ENCODE measurements at regions of chr22 and their contacts with region 1.

Region 1: DNA sequence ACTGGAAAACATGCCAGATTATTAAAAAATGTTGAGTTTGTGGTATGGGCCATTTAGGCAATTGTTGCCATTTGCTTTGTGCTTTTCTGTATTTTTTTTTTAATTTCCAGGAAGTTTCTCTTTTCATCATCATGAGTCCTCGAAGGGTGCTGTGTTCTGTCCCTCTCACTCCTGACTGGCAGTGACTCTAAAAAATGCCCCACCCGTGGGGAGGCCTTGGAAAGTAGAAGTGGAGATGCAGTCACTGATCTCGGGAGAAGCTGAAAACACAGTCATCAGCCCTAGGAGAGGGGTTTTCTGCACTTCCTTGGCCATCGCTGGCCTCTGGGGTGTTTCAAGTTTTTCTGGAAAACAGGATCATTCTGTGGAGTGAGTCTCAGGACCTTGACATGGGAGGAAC is 98.5 kb upstream of the GRK3 start:
- DNase-seq: no peak
- H3K4me3 ChIP-seq: no peak overlapping the region
- H3K27ac ChIP-seq: peak overlapping the region in 1 of 4 donors; percentile 41
- H3K4me1 ChIP-seq: no peaks in the 10 kb centered on the region
- H3K27me3 ChIP-seq: no peaks in the 10 kb centered on the region
- CTCF ChIP-seq: no peak
- EP300 ChIP-seq: no peak
- POLR2A ChIP-seq: no peak

Region 2: DNA sequence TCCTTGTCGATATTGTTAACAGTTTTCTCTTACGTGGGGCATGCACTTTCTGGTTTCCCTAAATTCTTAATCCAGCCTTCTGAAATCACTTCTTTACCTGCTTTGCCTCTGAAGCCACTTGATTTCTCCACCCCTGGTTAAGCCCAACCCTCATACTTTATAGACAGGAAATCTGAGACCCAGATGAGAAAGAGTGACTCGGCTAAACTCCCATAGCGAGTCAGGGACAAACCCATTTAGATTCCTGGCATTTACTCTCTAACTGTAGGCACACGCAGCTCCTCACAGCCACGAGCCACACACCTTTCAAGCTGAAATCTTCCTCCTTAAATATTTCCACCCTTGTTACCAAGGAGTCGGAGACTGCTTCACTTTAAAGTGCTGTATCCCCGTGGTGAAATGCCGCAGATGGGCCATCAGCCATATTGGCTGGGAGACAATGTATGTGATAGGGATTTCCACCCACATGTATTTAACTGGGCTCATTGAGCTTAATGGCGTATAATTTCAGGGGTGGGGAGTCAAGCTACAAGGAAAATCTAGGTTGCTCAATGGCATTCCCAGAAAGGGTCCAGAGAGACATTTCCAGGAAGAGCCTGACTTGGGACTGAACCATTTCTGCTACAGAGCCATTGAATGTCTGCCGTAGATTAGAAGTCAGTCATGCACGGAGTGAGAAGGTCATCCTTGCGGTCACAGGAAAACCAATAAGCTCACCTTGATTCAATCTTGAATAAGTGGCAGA is 48.7 kb after region 1 on chr22:
- in situ Hi-C with region 1: no loop called
- intact Hi-C with region 1: no loop called
- DNase-seq: no peak
- H3K4me3 ChIP-seq: no peak overlapping the region
- H3K27ac ChIP-seq: no peak overlapping the region
- H3K4me1 ChIP-seq: no peaks in the 10 kb centered on the region
- H3K27me3 ChIP-seq: no peaks in the 10 kb centered on the region
- CTCF ChIP-seq: no peak
- EP300 ChIP-seq: no peak
- POLR2A ChIP-seq: no peak

Region 3: DNA sequence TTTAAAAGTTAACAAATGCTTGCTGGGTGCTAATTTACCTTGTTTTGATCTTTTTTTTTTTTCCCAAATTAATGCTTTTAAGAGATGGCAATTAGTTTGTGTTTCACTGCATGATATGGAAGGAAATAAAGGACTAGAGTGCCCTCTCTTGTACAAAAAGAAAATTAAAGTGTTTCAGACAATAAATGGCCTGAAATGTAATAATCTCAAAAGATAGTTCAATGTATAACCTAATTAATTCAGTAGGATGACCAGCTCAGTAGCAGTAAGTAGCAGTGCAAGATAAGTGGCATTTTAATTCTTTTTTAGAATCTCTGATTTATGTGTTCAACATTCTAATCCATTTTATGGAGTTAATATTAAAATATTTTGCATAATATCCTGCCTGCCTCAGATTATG is 236.1 kb after region 1 on chr22:
- in situ Hi-C with region 1: loop called in 1 of 4 experiments (anchors 10 kb)
- intact Hi-C with region 1: loop called (anchors 5 kb)
- DNase-seq: no peak
- H3K4me3 ChIP-seq: no peak overlapping the region
- H3K27ac ChIP-seq: no peak overlapping the region
- H3K4me1 ChIP-seq: no peaks in the 10 kb centered on the region
- H3K27me3 ChIP-seq: no peaks in the 10 kb centered on the region
- CTCF ChIP-seq: peak; percentile 20 to 44 (median 30)
- EP300 ChIP-seq: no peak
- POLR2A ChIP-seq: no peak

Region 4: GRCh38 chr22:25709758-25710157 is 243.8 kb after region 1 on chr22:
- in situ Hi-C with region 1: loop called in 1 of 4 experiments (anchors 10 kb)
- intact Hi-C with region 1: loop called (anchors 5 kb)
- DNase-seq: no peak
- H3K4me3 ChIP-seq: no peak overlapping the region
- H3K27ac ChIP-seq: no peak overlapping the region
- H3K4me1 ChIP-seq: no peaks in the 10 kb centered on the region
- H3K27me3 ChIP-seq: no peaks in the 10 kb centered on the region
- CTCF ChIP-seq: no peak
- EP300 ChIP-seq: no peak
- POLR2A ChIP-seq: no peak

Region 5: DNA sequence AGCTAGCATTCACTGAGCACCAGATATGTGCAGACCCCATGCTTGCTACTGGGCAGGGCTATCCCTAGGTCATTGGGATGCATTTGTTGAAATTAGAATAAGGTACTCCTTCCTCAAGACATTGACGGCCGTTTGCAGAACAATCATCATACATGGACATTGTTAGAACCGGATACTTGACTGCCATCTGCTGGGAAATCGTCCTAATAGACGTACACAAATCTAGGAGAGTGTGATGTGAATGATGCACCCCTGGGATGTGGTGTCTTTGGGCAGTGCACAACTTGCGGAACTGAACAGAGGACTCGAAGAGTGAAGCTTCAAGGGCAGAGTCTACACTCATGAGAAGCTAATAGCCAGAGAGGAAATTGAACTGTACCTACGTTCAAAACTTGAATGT is 311.9 kb after region 1 on chr22:
- in situ Hi-C with region 1: loop called in 3 of 4 experiments (anchors 5 to 25 kb)
- intact Hi-C with region 1: loop called (anchors 5 kb)
- DNase-seq: no peak
- H3K4me3 ChIP-seq: no peak overlapping the region
- H3K27ac ChIP-seq: no peak overlapping the region
- H3K4me1 ChIP-seq: no peaks in the 10 kb centered on the region
- H3K27me3 ChIP-seq: no peaks in the 10 kb centered on the region
- CTCF ChIP-seq: peak in 2 of 5 experiments; percentile 13 to 30
- EP300 ChIP-seq: no peak
- POLR2A ChIP-seq: no peak